ENCODE measurements at regions of chr6 and their contacts with region 1.

Region 1: DNA sequence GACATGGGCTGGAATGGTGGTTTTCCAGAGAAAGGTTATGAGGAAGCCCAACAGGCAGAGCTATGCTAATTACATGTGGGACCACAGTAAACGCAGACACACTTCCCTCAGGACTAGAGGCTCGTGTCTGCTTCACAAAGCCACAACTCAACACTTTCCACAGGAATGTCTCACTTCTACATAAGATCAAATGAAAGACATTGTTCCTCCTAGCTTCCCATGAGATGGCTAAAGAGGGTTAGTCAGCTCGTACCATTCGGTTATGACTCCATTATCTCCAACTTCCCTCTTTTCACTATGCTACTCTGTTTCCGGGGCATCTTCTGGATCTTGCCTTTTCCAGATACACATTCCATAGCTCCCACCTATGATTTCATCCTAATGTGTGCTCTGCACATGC is 29.1 kb upstream of the ZC3H12D start:
- DNase-seq: no peak
- H3K4me3 ChIP-seq: no peak overlapping the region
- H3K4me3 Mint-ChIP-seq: no peak overlapping the region
- H3K27ac ChIP-seq: no peak overlapping the region
- H3K27ac Mint-ChIP-seq: peak overlapping the region in 5 of 7 donors; percentile 36 to 85 (median 36)
- H3K4me1 ChIP-seq: peaks cover 18% of the 10 kb centered on the region
- H3K4me1 Mint-ChIP-seq: peaks cover 16 to 45% (median 17%) of the 10 kb centered on the region in 4 donors
- H3K27me3 ChIP-seq: no peaks in the 10 kb centered on the region
- H3K27me3 Mint-ChIP-seq: no peaks in the 10 kb centered on the region

Region 2: GRCh38 chr6:149028767-149029405 is 485.0 kb before region 1 on chr6:
- CTCF ChIA-PET with region 1: interaction called, 12 read pairs
- POLR2A ChIA-PET with region 1: interaction called, 3 read pairs
- intact Hi-C with region 1: loop called (anchors 1 kb)
- DNase-seq: peak; percentile 77 to 80 (median 78)
- H3K4me3 ChIP-seq: no peak overlapping the region
- H3K4me3 Mint-ChIP-seq: peak overlapping the region in 2 of 8 donors; percentile 66 to 69
- H3K27ac ChIP-seq: no peak overlapping the region
- H3K27ac Mint-ChIP-seq: peak overlapping the region in 6 of 7 donors; percentile 10 to 93 (median 78)
- H3K4me1 ChIP-seq: peaks cover 49% of the 10 kb centered on the region
- H3K4me1 Mint-ChIP-seq: peaks cover 33 to 46% (median 42%) of the 10 kb centered on the region in 4 donors
- H3K27me3 ChIP-seq: no peaks in the 10 kb centered on the region
- H3K27me3 Mint-ChIP-seq: no peaks in the 10 kb centered on the region

Region 3: DNA sequence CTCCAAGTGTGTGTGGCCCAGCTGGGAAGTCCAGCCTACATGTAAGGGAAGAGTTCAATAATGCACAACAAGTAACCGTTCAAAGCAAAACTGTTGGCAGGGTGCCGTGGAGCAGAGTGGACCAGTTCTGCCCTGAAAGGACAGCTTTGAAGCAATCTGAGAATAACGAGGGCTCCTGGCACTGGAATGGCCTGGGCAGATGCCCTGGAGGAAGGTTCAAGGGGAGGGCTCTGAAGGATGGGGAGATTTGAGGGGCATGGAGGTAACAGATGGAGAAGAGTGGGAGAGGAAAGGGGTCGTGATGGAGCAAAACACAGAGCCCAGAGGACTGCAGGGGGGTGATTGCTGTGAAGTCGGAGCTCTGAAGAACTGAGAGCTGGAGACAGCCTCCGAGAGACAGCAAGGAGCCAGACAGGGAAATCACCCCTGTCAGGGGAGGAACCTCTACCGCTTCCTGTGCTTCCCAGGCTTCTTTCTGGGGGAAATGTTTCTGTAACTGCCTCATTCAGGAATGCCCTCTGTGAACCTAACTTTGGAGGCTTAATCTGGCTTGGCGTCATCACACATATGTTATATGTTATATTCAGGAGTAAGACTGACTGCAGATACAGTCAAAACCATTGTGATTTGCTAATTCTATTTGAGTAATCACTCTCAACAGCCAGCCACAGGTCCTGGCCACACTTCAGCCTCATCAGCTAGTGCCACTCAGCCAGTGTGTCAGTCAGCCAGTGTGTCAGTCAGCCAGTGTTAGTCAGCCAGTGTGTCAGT is 70.3 kb before region 1 on chr6:
- CTCF ChIA-PET with region 1: interaction called, 18 read pairs
- POLR2A ChIA-PET with region 1: interaction called, 3 read pairs
- intact Hi-C with region 1: loop called (anchors 5 kb)
- DNase-seq: no peak
- H3K4me3 ChIP-seq: no peak overlapping the region
- H3K4me3 Mint-ChIP-seq: no peak overlapping the region
- H3K27ac ChIP-seq: no peak overlapping the region
- H3K27ac Mint-ChIP-seq: peak overlapping the region in 1 of 7 donors; percentile 48
- H3K4me1 ChIP-seq: no peaks in the 10 kb centered on the region
- H3K4me1 Mint-ChIP-seq: peaks cover 0 to 13% (median 5%) of the 10 kb centered on the region in 4 donors
- H3K27me3 ChIP-seq: no peaks in the 10 kb centered on the region
- H3K27me3 Mint-ChIP-seq: no peaks in the 10 kb centered on the region

Region 4: GRCh38 chr6:149468179-149468578 is 45.7 kb before region 1 on chr6:
- CTCF ChIA-PET with region 1: interaction called, 45 read pairs
- POLR2A ChIA-PET with region 1: interaction called, 14 read pairs
- intact Hi-C with region 1: no loop called
- DNase-seq: no peak
- H3K4me3 ChIP-seq: no peak overlapping the region
- H3K4me3 Mint-ChIP-seq: peak overlapping the region in 7 of 8 donors; percentile 59 to 92 (median 74)
- H3K27ac ChIP-seq: peak overlapping the region; percentile 29
- H3K27ac Mint-ChIP-seq: peak overlapping the region; percentile 80 to 95 (median 88)
- H3K4me1 ChIP-seq: peaks cover 81% of the 10 kb centered on the region
- H3K4me1 Mint-ChIP-seq: peaks cover 45 to 84% (median 70%) of the 10 kb centered on the region in 4 donors
- H3K27me3 ChIP-seq: no peaks in the 10 kb centered on the region
- H3K27me3 Mint-ChIP-seq: no peaks in the 10 kb centered on the region

Region 5: GRCh38 chr6:149484733-149485700 is 28.9 kb before region 1 on chr6 and contains the start of gene ZC3H12D:
- CTCF ChIA-PET with region 1: no interaction called
- POLR2A ChIA-PET with region 1: no interaction called
- intact Hi-C with region 1: loop called (anchors 1 kb)
- DNase-seq: peak; percentile 83 to 96 (median 89)
- H3K4me3 ChIP-seq: peak within 1 kb of the TSS; percentile 76 to 82
- H3K4me3 Mint-ChIP-seq: peak within 1 kb of the TSS; percentile 90 to 98 (median 94)
- H3K27ac ChIP-seq: peak within 1 kb of the TSS; percentile 99
- H3K27ac Mint-ChIP-seq: peak within 1 kb of the TSS; percentile 98 to 100 (median 100)
- H3K4me1 ChIP-seq: peaks cover 32% of the 10 kb centered on the region
- H3K4me1 Mint-ChIP-seq: peaks cover 25 to 69% (median 38%) of the 10 kb centered on the region in 4 donors
- H3K27me3 ChIP-seq: no peaks in the 10 kb centered on the region
- H3K27me3 Mint-ChIP-seq: no peaks in the 10 kb centered on the region
- total RNA-seq, gene ZC3H12D: 91.5 to 106 TPM

Region 6: DNA sequence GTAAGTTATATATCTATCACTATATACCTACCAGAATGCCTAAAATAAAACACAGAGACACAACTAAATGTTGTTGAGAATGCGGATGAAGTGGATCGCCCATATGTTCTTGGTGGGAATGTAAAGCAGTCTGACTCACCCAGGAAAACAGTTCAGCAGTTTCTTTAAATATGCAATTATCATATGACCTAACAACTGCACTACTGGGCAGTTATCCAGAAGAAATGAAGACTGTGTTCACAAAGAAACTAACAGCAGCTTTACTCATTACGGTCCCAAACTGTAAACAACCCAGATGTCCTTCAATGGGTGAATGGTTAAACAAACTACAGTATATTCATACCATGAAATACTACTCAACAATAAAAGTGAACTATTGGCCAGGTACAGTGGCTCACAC is 14.8 kb before region 1 on chr6:
- CTCF ChIA-PET with region 1: interaction called, 13 read pairs
- POLR2A ChIA-PET with region 1: interaction called, 100 read pairs
- intact Hi-C with region 1: loop called (anchors 1 kb)
- DNase-seq: no peak
- H3K4me3 ChIP-seq: no peak overlapping the region
- H3K4me3 Mint-ChIP-seq: no peak overlapping the region
- H3K27ac ChIP-seq: no peak overlapping the region
- H3K27ac Mint-ChIP-seq: peak overlapping the region in 6 of 7 donors; percentile 51 to 96 (median 84)
- H3K4me1 ChIP-seq: peaks cover 52% of the 10 kb centered on the region
- H3K4me1 Mint-ChIP-seq: peaks cover 29 to 61% (median 40%) of the 10 kb centered on the region in 4 donors
- H3K27me3 ChIP-seq: no peaks in the 10 kb centered on the region
- H3K27me3 Mint-ChIP-seq: no peaks in the 10 kb centered on the region

Measured in CD4-positive, alpha-beta memory T cell (primary cell).